Activated T-helper 1 cell treated with anti-CD3 and anti-CD28 coated beads, Interleukin-12 subunit alpha, Interleukin-12 subunit beta, Interleukin-2, Interleukin-4 antibody, amounts not matched to agents 30 ng/mL and 10 ng/mL and 1 ng/mL, durations not matched to agents 14 hours and 24 hours and 36 hours (primary cell): ENCODE measurements at regions of chr2 and their contacts with region 1.

Region 1: GRCh38 chr2:189427872-189428271 is 13.4 kb upstream of the WDR75 start:
- DNase-seq: no peak
- H3K4me3 Mint-ChIP-seq: no peak overlapping the region
- H3K27ac Mint-ChIP-seq: no peak overlapping the region
- H3K4me1 Mint-ChIP-seq: peaks cover 6% of the 10 kb centered on the region
- H3K27me3 Mint-ChIP-seq: peaks cover 2% of the 10 kb centered on the region

Region 2: DNA sequence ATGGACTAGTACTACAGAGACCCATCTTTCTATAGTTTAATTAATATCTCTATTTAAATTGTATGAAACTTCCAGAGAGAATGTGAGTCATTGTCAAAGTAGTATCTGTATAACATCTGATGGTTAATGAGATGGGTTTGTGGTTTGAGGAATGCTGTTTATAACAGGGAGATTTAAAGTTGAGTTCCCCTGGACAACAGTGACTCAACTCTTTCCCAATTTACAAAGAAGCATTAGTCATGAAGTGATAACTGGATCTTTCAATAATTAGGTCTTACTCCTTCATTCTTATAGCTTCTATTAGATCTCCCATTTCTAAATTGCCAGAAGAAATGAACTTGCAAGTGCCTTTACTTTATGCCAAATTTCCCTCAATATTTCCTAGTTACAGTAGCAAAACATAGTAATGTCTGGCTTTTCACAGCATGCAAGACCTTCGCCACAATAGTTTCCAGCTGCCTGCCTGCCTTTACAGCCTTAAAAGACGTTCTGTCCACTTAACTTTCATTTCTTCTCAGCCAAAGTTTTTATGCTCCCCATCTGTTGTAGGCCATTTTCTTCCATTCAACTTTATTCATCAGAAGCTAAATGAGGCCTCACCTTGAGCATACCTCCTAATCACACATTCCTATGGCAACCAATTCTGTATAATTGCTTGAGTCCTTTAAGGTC is 34.3 kb before region 1 on chr2:
- intact Hi-C with region 1: no loop called
- DNase-seq: no peak
- H3K4me3 Mint-ChIP-seq: no peak overlapping the region
- H3K27ac Mint-ChIP-seq: no peak overlapping the region
- H3K4me1 Mint-ChIP-seq: no peaks in the 10 kb centered on the region
- H3K27me3 Mint-ChIP-seq: no peaks in the 10 kb centered on the region

Region 3: GRCh38 chr2:189498205-189498604 is 70.3 kb after region 1 on chr2:
- intact Hi-C with region 1: loop called (anchors 2 kb)
- DNase-seq: no peak
- H3K4me3 Mint-ChIP-seq: no peak overlapping the region
- H3K27ac Mint-ChIP-seq: no peak overlapping the region
- H3K4me1 Mint-ChIP-seq: no peaks in the 10 kb centered on the region
- H3K27me3 Mint-ChIP-seq: peaks cover 4% of the 10 kb centered on the region

Region 4: DNA sequence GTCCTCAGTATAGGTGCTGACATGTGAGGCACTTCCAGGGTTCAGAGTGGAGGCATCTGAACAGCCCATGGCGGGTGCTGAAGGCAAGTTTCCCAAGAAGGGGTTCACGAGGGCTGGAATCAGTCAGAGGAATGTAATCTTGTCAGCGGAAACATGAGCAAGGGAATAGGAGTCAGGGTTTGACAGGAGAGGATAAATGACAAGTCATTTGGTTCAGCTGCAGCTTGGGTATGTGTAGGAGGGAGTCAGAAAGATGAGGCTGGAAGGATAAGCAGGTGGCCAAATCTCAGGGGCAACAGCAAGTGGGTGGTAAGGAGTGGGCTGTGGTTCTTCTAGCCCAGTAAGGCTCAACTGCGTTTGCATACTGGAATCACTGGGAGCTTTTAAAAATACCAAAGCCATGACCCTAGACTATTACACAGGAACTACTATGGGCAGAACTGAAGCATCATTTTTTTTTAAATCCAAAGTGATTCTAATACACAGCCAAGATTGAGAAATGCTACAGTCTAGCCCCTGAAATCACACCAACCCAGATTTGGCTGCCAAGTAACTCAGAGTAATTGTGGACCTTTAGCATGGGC is 1179.2 kb after region 1 on chr2:
- intact Hi-C with region 1: no loop called
- DNase-seq: no peak
- H3K4me3 Mint-ChIP-seq: no peak overlapping the region
- H3K27ac Mint-ChIP-seq: no peak overlapping the region
- H3K4me1 Mint-ChIP-seq: peaks cover 6% of the 10 kb centered on the region
- H3K27me3 Mint-ChIP-seq: peaks cover 7% of the 10 kb centered on the region